HCT116 (cell line): ENCODE measurements at regions of chr3 and their contacts with region 1.

Region 1: DNA sequence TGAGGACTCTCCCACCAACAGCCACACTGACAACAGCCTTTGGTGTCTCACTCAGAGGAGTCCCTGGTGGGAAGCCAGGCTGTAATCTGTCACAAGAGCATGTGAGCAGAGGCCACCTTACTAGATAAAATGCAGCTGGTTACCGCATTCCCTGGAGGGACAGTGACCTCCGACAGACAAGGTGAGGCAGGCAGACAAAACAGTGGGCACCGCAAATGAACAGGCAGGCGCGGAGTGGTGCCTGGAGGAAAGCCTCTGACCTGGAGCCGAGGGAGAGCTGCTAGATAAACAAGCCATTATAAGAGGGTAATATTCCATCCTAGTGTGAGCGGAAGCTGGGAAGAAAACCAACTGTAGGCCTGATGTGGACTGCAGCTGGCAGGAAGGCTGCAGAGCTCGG is 736.4 kb downstream of the FHIT start:
- DNase-seq: no peak
- ATAC-seq: no peak
- H3K4me3 ChIP-seq: no peak overlapping the region
- H3K27ac ChIP-seq: no peak overlapping the region
- H3K4me1 ChIP-seq: no peaks in the 10 kb centered on the region
- H3K27me3 ChIP-seq: no peaks in the 10 kb centered on the region
- CTCF ChIP-seq: no peak
- POLR2A ChIP-seq: no peak
- RAD21 ChIP-seq: no peak

Region 2: DNA sequence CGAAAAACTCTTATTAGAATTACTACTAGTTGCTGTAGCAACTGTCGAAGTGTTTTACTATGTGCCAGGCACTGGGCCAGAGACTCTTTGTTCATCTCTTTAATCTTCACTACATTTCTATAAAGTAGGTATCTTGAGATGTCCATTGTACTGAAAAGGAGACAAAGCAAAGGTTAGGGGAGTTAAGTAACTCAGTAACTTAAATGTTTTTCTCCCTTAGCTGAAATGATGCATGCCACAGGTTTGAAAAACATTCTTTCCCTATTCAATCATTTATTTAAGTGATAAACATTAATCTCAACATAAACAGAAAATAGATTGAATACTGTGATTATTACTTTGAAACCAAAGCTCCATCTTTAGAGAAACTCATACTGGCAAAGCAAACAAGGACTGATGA is 39.8 kb before region 1 on chr3:
- CTCF ChIA-PET with region 1: no interaction called
- POLR2A ChIA-PET with region 1: no interaction called
- RAD21 ChIA-PET with region 1: no interaction called
- intact Hi-C with region 1: loop called (anchors 1 kb)
- DNase-seq: no peak
- ATAC-seq: no peak
- H3K4me3 ChIP-seq: no peak overlapping the region
- H3K27ac ChIP-seq: no peak overlapping the region
- H3K4me1 ChIP-seq: no peaks in the 10 kb centered on the region
- H3K27me3 ChIP-seq: no peaks in the 10 kb centered on the region
- CTCF ChIP-seq: no peak
- POLR2A ChIP-seq: no peak
- RAD21 ChIP-seq: no peak

Region 3: GRCh38 chr3:60948484-60948883 is 433.6 kb after region 1 on chr3:
- CTCF ChIA-PET with region 1: no interaction called
- POLR2A ChIA-PET with region 1: no interaction called
- RAD21 ChIA-PET with region 1: no interaction called
- intact Hi-C with region 1: no loop called
- DNase-seq: no peak
- ATAC-seq: no peak
- H3K4me3 ChIP-seq: no peak overlapping the region
- H3K27ac ChIP-seq: no peak overlapping the region
- H3K4me1 ChIP-seq: no peaks in the 10 kb centered on the region
- H3K27me3 ChIP-seq: no peaks in the 10 kb centered on the region
- CTCF ChIP-seq: peak; percentile 18 to 45 (median 32); a peak in 4 of 6 replicates
- POLR2A ChIP-seq: no peak
- RAD21 ChIP-seq: peak; percentile 50; the same call in 1 of the 2 replicates